ENCODE measurements at regions of chr7 and their contacts with region 1.

Region 1: GRCh38 chr7:105198223-105198622 is 184.2 kb downstream of the KMT2E start:
- DNase-seq: no peak
- H3K4me3 ChIP-seq: no peak overlapping the region
- H3K27ac ChIP-seq: no peak overlapping the region
- H3K4me1 ChIP-seq: peaks cover 0 to 7% (median 0%) of the 10 kb centered on the region in 4 donors
- H3K27me3 ChIP-seq: no peaks in the 10 kb centered on the region
- CTCF ChIP-seq: no peak
- EP300 ChIP-seq: no peak
- POLR2A ChIP-seq: no peak

Region 2: DNA sequence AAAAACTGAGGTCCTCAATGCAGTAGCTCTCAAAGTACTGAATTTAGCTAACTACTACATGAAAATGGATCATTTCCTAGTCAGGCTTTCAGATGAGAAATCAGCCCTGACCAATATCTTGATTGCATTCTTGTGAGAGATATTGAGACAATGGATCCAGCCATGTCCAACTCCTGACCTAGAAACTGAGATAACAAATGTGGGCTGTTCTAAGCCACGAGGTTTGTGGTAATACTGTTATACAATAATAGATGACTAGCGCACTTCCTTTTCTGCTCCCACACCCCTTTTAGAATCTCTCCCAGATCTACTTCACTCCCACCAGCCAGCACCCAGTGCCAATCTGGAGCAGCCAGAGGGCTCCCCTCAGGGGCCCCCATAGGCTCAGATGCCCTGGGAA is 393.5 kb before region 1 on chr7:
- in situ Hi-C with region 1: no loop called
- intact Hi-C with region 1: loop called (anchors 5 kb)
- DNase-seq: no peak
- H3K4me3 ChIP-seq: no peak overlapping the region
- H3K27ac ChIP-seq: no peak overlapping the region
- H3K4me1 ChIP-seq: no peaks in the 10 kb centered on the region
- H3K27me3 ChIP-seq: peaks cover 6% of the 10 kb centered on the region
- CTCF ChIP-seq: no peak
- EP300 ChIP-seq: no peak
- POLR2A ChIP-seq: no peak

Region 3: GRCh38 chr7:105133986-105134655 is 64.1 kb before region 1 on chr7:
- in situ Hi-C with region 1: no loop called
- intact Hi-C with region 1: loop called (anchors 2 kb)
- DNase-seq: no peak
- H3K4me3 ChIP-seq: no peak overlapping the region
- H3K27ac ChIP-seq: no peak overlapping the region
- H3K4me1 ChIP-seq: no peaks in the 10 kb centered on the region
- H3K27me3 ChIP-seq: no peaks in the 10 kb centered on the region
- CTCF ChIP-seq: no peak
- EP300 ChIP-seq: no peak
- POLR2A ChIP-seq: no peak